CD4-positive, alpha-beta T cell (primary cell): ENCODE measurements at regions of chr6 and their contacts with region 1.

Region 1: GRCh38 chr6:42901536-42901957 is 14.3 kb upstream of the PTCRA start:
- DNase-seq: peak; percentile 43 to 90 (median 60)
- ATAC-seq: peak; percentile 97
- H3K4me3 ChIP-seq: no peak overlapping the region
- H3K4me3 Mint-ChIP-seq: no peak overlapping the region
- H3K27ac ChIP-seq: no peak overlapping the region
- H3K27ac Mint-ChIP-seq: no peak overlapping the region
- H3K4me1 ChIP-seq: peaks cover 7% of the 10 kb centered on the region
- H3K4me1 Mint-ChIP-seq: peaks cover 11% of the 10 kb centered on the region
- H3K27me3 ChIP-seq: no peaks in the 10 kb centered on the region
- H3K27me3 Mint-ChIP-seq: no peaks in the 10 kb centered on the region
- CTCF ChIP-seq: peak; percentile 91

Region 2: DNA sequence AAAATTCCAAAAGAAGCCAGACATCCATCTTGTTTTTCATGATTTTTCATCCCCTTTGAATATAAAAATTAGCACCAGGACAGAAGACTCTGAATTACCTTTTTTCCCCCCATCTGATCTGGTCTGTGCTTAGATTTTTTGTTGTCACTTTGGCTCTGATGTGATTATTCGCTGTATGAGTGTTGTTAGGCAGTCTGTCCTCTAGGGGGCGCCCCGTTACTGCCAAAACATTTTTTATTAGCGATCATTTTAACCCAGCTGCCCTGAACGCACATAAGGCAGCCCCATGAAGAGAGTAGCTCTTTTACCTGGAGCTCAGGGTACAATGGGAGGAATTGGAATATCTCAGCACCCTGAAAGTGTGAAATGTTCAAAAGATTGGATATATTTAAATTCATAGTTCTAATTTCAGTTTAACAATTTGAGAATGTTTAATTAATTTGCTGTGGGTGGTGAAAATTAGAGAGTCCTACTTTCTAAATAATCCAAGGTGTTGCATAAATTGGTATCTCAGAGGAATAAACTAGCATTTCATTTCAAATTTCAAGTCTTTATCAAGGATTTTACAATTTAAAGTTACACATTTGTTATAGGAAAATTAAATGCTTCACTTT is 239.9 kb before region 1 on chr6:
- CTCF ChIA-PET with region 1: interaction called, 10 read pairs
- POLR2A ChIA-PET with region 1: interaction called, 3 read pairs
- intact Hi-C with region 1: loop called (anchors 1 kb)
- DNase-seq: peak; percentile 75 to 91 (median 85)
- ATAC-seq: peak; percentile 100
- H3K4me3 ChIP-seq: no peak overlapping the region
- H3K4me3 Mint-ChIP-seq: no peak overlapping the region
- H3K27ac ChIP-seq: no peak overlapping the region
- H3K27ac Mint-ChIP-seq: no peak overlapping the region
- H3K4me1 ChIP-seq: no peaks in the 10 kb centered on the region
- H3K4me1 Mint-ChIP-seq: no peaks in the 10 kb centered on the region
- H3K27me3 ChIP-seq: no peaks in the 10 kb centered on the region
- H3K27me3 Mint-ChIP-seq: no peaks in the 10 kb centered on the region
- CTCF ChIP-seq: peak; percentile 90

Region 3: GRCh38 chr6:42726485-42727086 is 175.0 kb before region 1 on chr6:
- CTCF ChIA-PET with region 1: interaction called, 4 read pairs
- POLR2A ChIA-PET with region 1: no interaction called
- intact Hi-C with region 1: loop called (anchors 2 to 5 kb)
- DNase-seq: peak; percentile 54 to 95 (median 66)
- ATAC-seq: peak; percentile 97
- H3K4me3 ChIP-seq: peak overlapping the region; percentile 54
- H3K4me3 Mint-ChIP-seq: peak overlapping the region; percentile 87
- H3K27ac ChIP-seq: peak overlapping the region; percentile 64 to 65
- H3K27ac Mint-ChIP-seq: peak overlapping the region; percentile 90
- H3K4me1 ChIP-seq: peaks cover 14% of the 10 kb centered on the region
- H3K4me1 Mint-ChIP-seq: peaks cover 19% of the 10 kb centered on the region
- H3K27me3 ChIP-seq: no peaks in the 10 kb centered on the region
- H3K27me3 Mint-ChIP-seq: no peaks in the 10 kb centered on the region
- CTCF ChIP-seq: peak; percentile 90

Region 4: DNA sequence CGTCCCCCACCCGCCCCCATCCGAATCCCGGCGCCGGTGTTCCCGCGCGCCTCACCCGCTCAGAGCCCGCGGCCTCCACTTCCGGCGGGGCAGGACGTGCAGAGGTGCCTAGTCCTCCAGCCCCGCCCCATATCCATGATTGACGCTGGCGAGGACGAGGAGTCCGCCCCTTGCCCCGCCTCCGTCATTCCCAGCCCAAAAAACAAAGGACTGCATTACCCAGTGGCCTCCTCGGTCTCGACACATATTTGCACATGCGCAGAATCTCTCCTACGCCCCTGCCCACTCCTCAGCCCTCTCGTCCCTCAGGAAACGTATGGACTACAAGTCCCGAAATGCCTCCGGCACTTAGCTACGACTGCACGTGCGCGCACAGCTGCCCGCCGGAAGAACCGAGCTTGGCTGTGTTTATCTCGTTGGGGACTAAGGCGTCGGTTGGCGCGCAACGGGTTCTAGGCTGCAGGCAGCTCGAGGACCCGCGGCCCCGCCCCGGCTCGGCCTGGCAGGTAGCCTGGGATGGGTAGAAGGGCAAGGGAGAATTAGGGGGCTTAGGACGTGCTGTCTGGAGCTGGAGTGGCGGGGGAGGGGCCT is 112.4 kb after region 1 on chr6 and contains the starts of genes KLHDC3 and MEA1:
- CTCF ChIA-PET with region 1: no interaction called
- POLR2A ChIA-PET with region 1: no interaction called
- intact Hi-C with region 1: loop called in 1 of 2 experiments (anchors 5 kb)
- DNase-seq: peak; percentile 95 to 100 (median 98)
- ATAC-seq: peak; percentile 91
- H3K4me3 ChIP-seq: peak within 1 kb of the TSS; percentile 86
- H3K4me3 Mint-ChIP-seq: peak within 1 kb of the TSS; percentile 88
- H3K27ac ChIP-seq: peak within 1 kb of the TSS; percentile 51 to 59
- H3K27ac Mint-ChIP-seq: peak within 1 kb of the TSS; percentile 81
- H3K4me1 ChIP-seq: peaks cover 55% of the 10 kb centered on the region
- H3K4me1 Mint-ChIP-seq: peaks cover 59% of the 10 kb centered on the region
- H3K27me3 ChIP-seq: no peaks in the 10 kb centered on the region
- H3K27me3 Mint-ChIP-seq: no peaks in the 10 kb centered on the region
- CTCF ChIP-seq: no peak
- total RNA-seq, gene KLHDC3: 21.0 to 22.3 TPM
- total RNA-seq, gene MEA1: 13.6 to 17.0 TPM

Region 5: GRCh38 chr6:43143235-43144124 is 241.9 kb after region 1 on chr6:
- CTCF ChIA-PET with region 1: interaction called, 6 read pairs
- POLR2A ChIA-PET with region 1: interaction called, 4 read pairs
- intact Hi-C with region 1: loop called (anchors 1 kb)
- DNase-seq: peak; percentile 50 to 88 (median 70)
- ATAC-seq: peak; percentile 99
- H3K4me3 ChIP-seq: no peak overlapping the region
- H3K4me3 Mint-ChIP-seq: no peak overlapping the region
- H3K27ac ChIP-seq: no peak overlapping the region
- H3K27ac Mint-ChIP-seq: no peak overlapping the region
- H3K4me1 ChIP-seq: peaks cover 19% of the 10 kb centered on the region
- H3K4me1 Mint-ChIP-seq: peaks cover 10% of the 10 kb centered on the region
- H3K27me3 ChIP-seq: peaks cover 0 to 2% of the 10 kb centered on the region in 2 experiments
- H3K27me3 Mint-ChIP-seq: no peaks in the 10 kb centered on the region
- CTCF ChIP-seq: peak; percentile 88

Region 6: DNA sequence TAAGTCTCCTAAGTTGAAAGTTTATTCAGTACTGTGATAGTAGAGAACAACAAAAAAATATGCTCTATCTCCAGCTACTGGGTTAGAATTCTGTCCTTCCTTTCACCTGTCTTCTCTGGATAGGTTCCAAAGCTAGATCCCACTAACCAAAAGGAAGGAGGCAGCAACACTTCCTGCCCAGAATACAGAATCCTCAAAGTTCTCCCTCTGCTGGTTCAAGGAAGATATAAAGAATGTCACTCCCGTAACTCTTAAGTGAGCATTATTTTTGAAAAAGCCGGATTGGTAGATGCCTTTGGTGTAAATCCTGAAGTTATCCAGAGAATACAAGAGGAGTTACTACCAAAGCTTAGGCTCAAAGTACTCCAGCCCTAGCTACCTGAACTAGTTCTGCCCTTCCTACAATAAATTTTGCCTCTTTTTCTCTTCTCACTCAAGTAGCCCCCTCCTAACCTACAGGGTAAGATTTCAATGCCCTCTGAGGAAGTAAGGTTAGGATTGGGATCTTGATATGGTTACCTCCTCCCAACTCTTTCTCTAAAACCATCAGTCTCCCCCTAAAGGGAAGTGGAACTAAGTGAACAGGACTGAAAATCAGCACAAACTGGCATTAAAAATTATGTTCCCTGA is 433.0 kb after region 1 on chr6:
- CTCF ChIA-PET with region 1: no interaction called
- POLR2A ChIA-PET with region 1: no interaction called
- intact Hi-C with region 1: loop called in 1 of 2 experiments (anchors 10 kb)
- DNase-seq: peak in 3 of 14 experiments; percentile 30 to 46 (median 46)
- ATAC-seq: no peak
- H3K4me3 ChIP-seq: no peak overlapping the region
- H3K4me3 Mint-ChIP-seq: no peak overlapping the region
- H3K27ac ChIP-seq: no peak overlapping the region
- H3K27ac Mint-ChIP-seq: peak overlapping the region; percentile 22
- H3K4me1 ChIP-seq: peaks cover 12% of the 10 kb centered on the region
- H3K4me1 Mint-ChIP-seq: peaks cover 25% of the 10 kb centered on the region
- H3K27me3 ChIP-seq: no peaks in the 10 kb centered on the region
- H3K27me3 Mint-ChIP-seq: no peaks in the 10 kb centered on the region
- CTCF ChIP-seq: peak; percentile 54

Region 7: DNA sequence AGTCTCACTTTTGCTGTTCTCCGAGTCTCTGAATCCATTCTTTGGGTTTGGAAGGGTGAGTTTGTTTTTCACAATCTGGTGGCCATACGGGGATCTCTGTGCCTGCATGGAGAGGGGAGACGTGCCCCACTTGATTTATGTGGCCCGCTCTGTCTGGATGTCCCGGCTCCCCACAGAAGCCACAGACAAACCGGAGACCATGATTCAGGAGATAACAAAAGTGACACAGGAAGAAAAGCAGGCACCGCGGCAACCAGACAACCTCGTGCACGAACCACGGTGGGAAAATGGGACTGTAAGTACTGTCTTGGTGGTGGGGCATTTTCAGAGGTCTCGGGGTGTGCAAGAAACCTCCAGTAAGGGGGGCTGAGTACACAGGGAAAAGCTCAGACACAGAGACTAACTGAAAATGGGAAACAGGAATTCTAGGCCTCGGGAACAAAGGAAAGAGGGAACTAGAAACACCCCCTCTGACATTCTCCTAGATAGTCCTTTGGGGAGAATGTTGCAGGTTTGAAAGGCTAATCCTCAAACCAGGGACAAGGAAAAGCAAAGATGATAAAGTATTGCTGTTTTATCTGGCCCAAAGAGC is 490.0 kb after region 1 on chr6:
- CTCF ChIA-PET with region 1: no interaction called
- POLR2A ChIA-PET with region 1: no interaction called
- intact Hi-C with region 1: loop called in 1 of 2 experiments (anchors 5 kb)
- DNase-seq: peak in 12 of 14 experiments; percentile 14 to 83 (median 40)
- ATAC-seq: peak; percentile 78
- H3K4me3 ChIP-seq: peak overlapping the region; percentile 22
- H3K4me3 Mint-ChIP-seq: peak overlapping the region; percentile 51
- H3K27ac ChIP-seq: no peak overlapping the region
- H3K27ac Mint-ChIP-seq: peak overlapping the region; percentile 46
- H3K4me1 ChIP-seq: peaks cover 25% of the 10 kb centered on the region
- H3K4me1 Mint-ChIP-seq: peaks cover 50% of the 10 kb centered on the region
- H3K27me3 ChIP-seq: no peaks in the 10 kb centered on the region
- H3K27me3 Mint-ChIP-seq: no peaks in the 10 kb centered on the region
- CTCF ChIP-seq: no peak

Region 8: GRCh38 chr6:43667245-43668150 is 766.0 kb after region 1 on chr6:
- CTCF ChIA-PET with region 1: no interaction called
- POLR2A ChIA-PET with region 1: no interaction called
- intact Hi-C with region 1: no loop called
- DNase-seq: peak; percentile 58 to 89 (median 80)
- ATAC-seq: peak; percentile 83
- H3K4me3 ChIP-seq: no peak overlapping the region
- H3K4me3 Mint-ChIP-seq: peak overlapping the region; percentile 72
- H3K27ac ChIP-seq: no peak overlapping the region
- H3K27ac Mint-ChIP-seq: peak overlapping the region; percentile 67
- H3K4me1 ChIP-seq: peaks cover 17% of the 10 kb centered on the region
- H3K4me1 Mint-ChIP-seq: peaks cover 20% of the 10 kb centered on the region
- H3K27me3 ChIP-seq: no peaks in the 10 kb centered on the region
- H3K27me3 Mint-ChIP-seq: no peaks in the 10 kb centered on the region
- CTCF ChIP-seq: peak; percentile 78